Mammary epithelial cell (primary cell): ENCODE measurements at regions of chr12 and their contacts with region 1.

Region 1: GRCh38 chr12:117025481-117026151 is 73.6 kb downstream of the TESC start:
- DNase-seq: peak; percentile 44
- H3K4me3 ChIP-seq: no peak overlapping the region
- H3K27ac ChIP-seq: no peak overlapping the region
- H3K4me1 ChIP-seq: peaks cover 3% of the 10 kb centered on the region
- H3K27me3 ChIP-seq: no peaks in the 10 kb centered on the region
- CTCF ChIP-seq: peak; percentile 84 to 87

Region 2: GRCh38 chr12:116749884-116750283 is 275.7 kb before region 1 on chr12:
- CTCF ChIA-PET with region 1: no interaction called
- dilution Hi-C with region 1: no loop called
- in situ Hi-C with region 1: no loop called
- intact Hi-C with region 1: no loop called
- DNase-seq: no peak
- H3K4me3 ChIP-seq: no peak overlapping the region
- H3K27ac ChIP-seq: no peak overlapping the region
- H3K4me1 ChIP-seq: no peaks in the 10 kb centered on the region
- H3K27me3 ChIP-seq: no peaks in the 10 kb centered on the region
- CTCF ChIP-seq: no peak

Region 3: GRCh38 chr12:117090816-117091711 is 65.4 kb after region 1 on chr12:
- CTCF ChIA-PET with region 1: no interaction called
- dilution Hi-C with region 1: loop called (anchors 5 kb)
- in situ Hi-C with region 1: no loop called
- intact Hi-C with region 1: no loop called
- DNase-seq: no peak
- H3K4me3 ChIP-seq: no peak overlapping the region
- H3K27ac ChIP-seq: no peak overlapping the region
- H3K4me1 ChIP-seq: no peaks in the 10 kb centered on the region
- H3K27me3 ChIP-seq: peaks cover 3% of the 10 kb centered on the region
- CTCF ChIP-seq: no peak

Region 4: DNA sequence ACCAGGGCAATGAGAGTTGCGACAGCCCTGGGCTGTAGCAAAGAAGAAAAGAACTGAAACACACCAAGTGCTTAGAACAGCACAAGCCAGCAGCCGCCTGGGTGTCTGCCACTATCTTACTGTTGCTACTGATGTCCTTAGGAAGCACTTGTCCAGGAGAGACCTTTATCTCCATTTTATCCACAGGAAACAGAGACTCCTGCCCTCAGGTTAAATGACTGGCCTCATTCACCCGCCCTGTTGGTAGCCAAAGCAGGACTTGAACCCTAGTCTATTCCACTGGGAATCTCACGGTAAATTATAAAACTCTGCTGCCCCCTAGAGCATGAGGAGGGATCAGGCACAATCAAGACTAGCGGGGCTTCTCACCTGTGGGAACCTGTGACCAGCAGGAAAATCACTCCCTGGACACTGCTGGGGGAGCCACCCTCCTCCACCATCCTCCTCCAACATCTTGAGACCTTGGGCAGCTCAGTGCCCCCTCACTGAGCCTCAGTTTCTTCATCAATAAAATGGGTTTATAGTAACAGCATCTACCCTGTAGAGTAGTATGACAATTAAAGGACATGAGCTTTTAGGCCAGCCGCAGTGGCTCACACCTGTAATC is 94.1 kb after region 1 on chr12:
- CTCF ChIA-PET with region 1: no interaction called
- dilution Hi-C with region 1: no loop called
- in situ Hi-C with region 1: no loop called
- intact Hi-C with region 1: loop called (anchors 1 kb)
- DNase-seq: no peak
- H3K4me3 ChIP-seq: no peak overlapping the region
- H3K27ac ChIP-seq: no peak overlapping the region
- H3K4me1 ChIP-seq: no peaks in the 10 kb centered on the region
- H3K27me3 ChIP-seq: no peaks in the 10 kb centered on the region
- CTCF ChIP-seq: peak; percentile 53 to 69

Region 5: DNA sequence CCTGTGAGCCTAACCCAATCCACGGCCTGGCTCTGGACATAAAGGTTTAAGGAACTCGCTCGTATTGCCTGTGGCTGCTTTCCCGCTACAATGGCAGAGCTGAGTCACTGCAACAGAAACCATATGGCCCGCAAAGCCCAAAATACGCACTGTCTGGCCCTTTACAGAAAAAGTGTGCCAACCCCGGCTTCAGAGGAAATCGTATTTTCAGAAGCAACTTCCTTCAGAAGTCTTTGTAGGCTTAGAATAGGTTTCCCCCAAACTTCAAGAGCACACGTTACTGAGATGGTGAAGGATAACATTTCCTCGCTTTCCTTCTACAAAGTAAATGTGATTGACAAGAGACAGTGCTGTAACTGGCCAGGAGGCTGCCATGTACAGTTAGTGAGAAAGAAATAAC is 108.4 kb after region 1 on chr12:
- CTCF ChIA-PET with region 1: no interaction called
- dilution Hi-C with region 1: no loop called
- in situ Hi-C with region 1: no loop called
- intact Hi-C with region 1: loop called (anchors 5 kb)
- DNase-seq: no peak
- H3K4me3 ChIP-seq: no peak overlapping the region
- H3K27ac ChIP-seq: no peak overlapping the region
- H3K4me1 ChIP-seq: no peaks in the 10 kb centered on the region
- H3K27me3 ChIP-seq: no peaks in the 10 kb centered on the region
- CTCF ChIP-seq: no peak

Region 6: GRCh38 chr12:117155278-117156060 is 129.9 kb after region 1 on chr12:
- CTCF ChIA-PET with region 1: no interaction called
- dilution Hi-C with region 1: no loop called
- in situ Hi-C with region 1: no loop called
- intact Hi-C with region 1: loop called (anchors 10 kb)
- DNase-seq: peak; percentile 80
- H3K4me3 ChIP-seq: no peak overlapping the region
- H3K27ac ChIP-seq: no peak overlapping the region
- H3K4me1 ChIP-seq: no peaks in the 10 kb centered on the region
- H3K27me3 ChIP-seq: no peaks in the 10 kb centered on the region
- CTCF ChIP-seq: peak; percentile 74 to 80

Region 7: GRCh38 chr12:117857632-117858612 is 832.3 kb after region 1 on chr12:
- CTCF ChIA-PET with region 1: no interaction called
- dilution Hi-C with region 1: no loop called
- in situ Hi-C with region 1: no loop called
- intact Hi-C with region 1: loop called (anchors 10 kb)
- DNase-seq: peak; percentile 41
- H3K4me3 ChIP-seq: no peak overlapping the region
- H3K27ac ChIP-seq: no peak overlapping the region
- H3K4me1 ChIP-seq: no peaks in the 10 kb centered on the region
- H3K27me3 ChIP-seq: no peaks in the 10 kb centered on the region
- CTCF ChIP-seq: peak; percentile 42 to 51